WTC11 (cell line): ENCODE measurements at regions of chr15 and their contacts with region 1.

Region 1: DNA sequence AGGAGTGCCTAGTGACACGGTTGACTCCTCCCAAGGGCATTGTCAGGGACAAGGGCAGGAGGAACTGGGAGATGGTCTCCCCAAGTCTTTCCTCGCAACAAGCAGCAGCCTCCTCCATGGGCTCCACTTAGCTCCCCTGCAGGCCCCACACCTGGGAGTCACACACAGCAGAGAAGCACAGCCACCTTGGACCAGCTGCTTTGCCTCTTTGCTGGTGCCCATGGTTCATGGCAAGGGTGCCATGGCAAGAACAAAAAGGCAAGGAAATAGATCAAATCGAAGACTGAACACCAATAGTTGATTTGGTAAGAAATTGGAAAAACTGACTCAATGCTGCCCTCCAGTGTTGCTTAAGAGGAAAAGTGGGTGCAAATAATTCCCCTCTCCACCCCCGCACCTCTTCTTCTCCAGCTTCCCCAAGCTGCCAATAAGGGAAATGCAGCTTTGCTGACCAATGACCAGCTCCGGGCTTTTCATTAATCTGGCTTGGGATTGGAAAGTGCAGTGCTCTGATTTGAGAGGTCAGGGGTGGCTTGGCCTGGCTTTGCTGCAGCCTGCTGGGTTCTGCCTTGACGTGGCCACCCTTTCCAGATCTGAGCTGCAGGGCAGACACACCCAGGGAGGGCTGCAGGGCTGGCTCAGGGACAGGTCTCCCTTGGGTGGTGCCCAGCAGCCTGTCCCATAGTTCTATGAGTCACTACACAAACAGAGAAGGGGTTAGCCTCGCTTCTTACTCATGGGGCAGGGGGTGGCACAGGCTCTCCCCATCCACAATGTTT is 162.0 kb downstream of the KLF13 start:
- DNase-seq: peak; percentile 53
- ATAC-seq: peak; percentile 76
- H3K4me3 Mint-ChIP-seq: no peak overlapping the region
- H3K27ac Mint-ChIP-seq: no peak overlapping the region
- H3K4me1 Mint-ChIP-seq: peaks cover 5% of the 10 kb centered on the region; the same call in 1 of the 2 replicates
- H3K27me3 Mint-ChIP-seq: peaks cover 23% of the 10 kb centered on the region
- CTCF ChIP-seq: peak; percentile 71

Region 2: DNA sequence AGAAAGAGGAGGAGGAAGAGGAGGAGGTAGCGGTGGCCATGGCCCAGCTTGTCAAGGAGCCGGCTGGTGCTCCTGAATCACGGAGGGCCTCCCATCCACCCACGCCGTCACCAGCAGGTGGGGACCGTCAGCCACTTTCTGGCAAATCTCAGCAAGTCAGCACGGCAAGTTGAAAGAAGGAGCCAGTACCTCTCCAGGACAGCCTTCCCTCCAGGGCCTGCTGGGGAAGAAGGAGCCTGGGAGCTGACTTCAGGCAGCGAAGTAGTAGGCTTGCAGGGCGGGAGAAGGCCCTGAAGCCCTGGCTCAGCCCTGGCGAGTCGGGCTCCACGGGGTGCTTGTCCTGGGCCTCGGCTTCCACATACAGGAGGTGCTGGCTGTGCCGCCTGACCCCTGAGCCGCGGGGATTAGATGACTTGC is 287.9 kb before region 1 on chr15:
- CTCF ChIA-PET with region 1: interaction called, 31 read pairs
- POLR2A ChIA-PET with region 1: no interaction called
- DNase-seq: peak; percentile 76
- ATAC-seq: peak; percentile 80
- H3K4me3 Mint-ChIP-seq: no peak overlapping the region
- H3K27ac Mint-ChIP-seq: no peak overlapping the region
- H3K4me1 Mint-ChIP-seq: peaks cover 14% of the 10 kb centered on the region
- H3K27me3 Mint-ChIP-seq: no peaks in the 10 kb centered on the region
- CTCF ChIP-seq: no peak

Region 3: DNA sequence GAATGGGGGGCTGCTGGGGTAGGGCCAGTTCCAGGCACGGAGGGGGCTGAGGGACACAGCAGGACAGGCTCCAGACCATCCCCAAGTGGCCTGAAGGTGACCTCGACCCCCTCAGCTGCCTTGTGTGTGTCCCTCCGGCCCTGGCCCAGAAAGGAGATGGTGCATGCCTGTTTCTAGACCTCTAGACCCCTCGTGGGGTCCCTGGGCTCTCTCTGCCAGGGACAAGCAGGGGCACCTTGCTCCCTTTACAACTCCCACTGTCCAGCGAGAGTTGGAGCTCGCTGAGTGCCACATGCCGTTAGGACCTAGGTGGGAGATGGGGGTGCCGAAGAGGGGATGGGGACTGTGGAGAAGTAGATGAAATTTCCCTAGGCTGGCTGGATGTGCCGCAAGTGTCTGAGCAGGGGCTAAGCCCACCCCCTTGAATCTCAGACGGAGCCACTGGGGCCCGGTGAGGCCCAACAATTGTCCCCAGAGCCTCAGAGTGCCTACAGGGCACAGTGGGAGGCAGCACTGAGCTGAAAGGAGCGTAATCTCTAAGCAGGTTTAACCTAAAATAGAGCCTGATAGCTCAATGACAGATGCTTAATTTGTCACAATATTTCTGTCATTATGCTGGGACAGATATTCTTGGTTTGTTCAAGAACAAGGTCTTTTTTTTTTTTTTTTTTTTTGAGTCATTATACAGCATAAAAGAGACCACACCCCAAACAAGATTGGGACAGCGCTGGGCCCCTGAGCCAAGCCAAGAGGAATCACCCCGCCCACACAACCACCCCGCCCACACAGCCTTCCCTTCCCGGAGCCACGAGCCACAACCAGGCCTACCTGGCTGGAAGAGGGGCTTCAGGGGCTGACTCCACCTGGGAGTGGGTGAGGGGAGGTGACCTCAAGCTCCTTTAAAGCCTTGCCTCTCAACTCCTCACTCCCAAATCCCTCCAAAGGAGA is 185.6 kb before region 1 on chr15:
- CTCF ChIA-PET with region 1: interaction called, 10 read pairs
- POLR2A ChIA-PET with region 1: no interaction called
- DNase-seq: peak; percentile 48
- ATAC-seq: peak; percentile 23
- H3K4me3 Mint-ChIP-seq: no peak overlapping the region
- H3K27ac Mint-ChIP-seq: no peak overlapping the region
- H3K4me1 Mint-ChIP-seq: peaks cover 51% of the 10 kb centered on the region
- H3K27me3 Mint-ChIP-seq: peaks cover 5% of the 10 kb centered on the region
- CTCF ChIP-seq: no peak

Region 4: GRCh38 chr15:31365655-31366127 is 122.9 kb before region 1 on chr15:
- CTCF ChIA-PET with region 1: interaction called, 21 read pairs
- POLR2A ChIA-PET with region 1: no interaction called
- DNase-seq: peak; percentile 78
- ATAC-seq: peak; percentile 78
- H3K4me3 Mint-ChIP-seq: peak overlapping the region; percentile 41
- H3K27ac Mint-ChIP-seq: no peak overlapping the region
- H3K4me1 Mint-ChIP-seq: peaks cover 92% of the 10 kb centered on the region
- H3K27me3 Mint-ChIP-seq: no peaks in the 10 kb centered on the region
- CTCF ChIP-seq: no peak

Region 5: GRCh38 chr15:31442203-31443111 is 46.2 kb before region 1 on chr15:
- CTCF ChIA-PET with region 1: interaction called, 99 read pairs
- POLR2A ChIA-PET with region 1: no interaction called
- DNase-seq: no peak
- ATAC-seq: peak; percentile 68
- H3K4me3 Mint-ChIP-seq: peak overlapping the region; percentile 3; the same call in 1 of the 2 replicates
- H3K27ac Mint-ChIP-seq: no peak overlapping the region
- H3K4me1 Mint-ChIP-seq: peaks cover 6% of the 10 kb centered on the region
- H3K27me3 Mint-ChIP-seq: peaks cover 22% of the 10 kb centered on the region
- CTCF ChIP-seq: no peak

Region 6: GRCh38 chr15:31472636-31473384 is 15.8 kb before region 1 on chr15:
- CTCF ChIA-PET with region 1: interaction called, 13 read pairs
- POLR2A ChIA-PET with region 1: no interaction called
- DNase-seq: no peak
- ATAC-seq: peak; percentile 53; the same call in 1 of the 2 replicates
- H3K4me3 Mint-ChIP-seq: no peak overlapping the region
- H3K27ac Mint-ChIP-seq: no peak overlapping the region
- H3K4me1 Mint-ChIP-seq: peaks cover 6% of the 10 kb centered on the region
- H3K27me3 Mint-ChIP-seq: no peaks in the 10 kb centered on the region
- CTCF ChIP-seq: no peak